ENCODE measurements at regions of chr3 and their contacts with region 1.

Region 1: GRCh38 chr3:116254541-116254940 is 190.7 kb downstream of the LSAMP start:
- DNase-seq: no peak
- H3K4me3 ChIP-seq: no peak overlapping the region
- H3K27ac ChIP-seq: peak overlapping the region in 3 of 4 donors; percentile 58 to 74 (median 61)
- H3K4me1 ChIP-seq: peaks cover 3 to 71% (median 56%) of the 10 kb centered on the region in 4 donors
- H3K27me3 ChIP-seq: no peaks in the 10 kb centered on the region
- CTCF ChIP-seq: no peak
- EP300 ChIP-seq: no peak
- POLR2A ChIP-seq: no peak

Region 2: DNA sequence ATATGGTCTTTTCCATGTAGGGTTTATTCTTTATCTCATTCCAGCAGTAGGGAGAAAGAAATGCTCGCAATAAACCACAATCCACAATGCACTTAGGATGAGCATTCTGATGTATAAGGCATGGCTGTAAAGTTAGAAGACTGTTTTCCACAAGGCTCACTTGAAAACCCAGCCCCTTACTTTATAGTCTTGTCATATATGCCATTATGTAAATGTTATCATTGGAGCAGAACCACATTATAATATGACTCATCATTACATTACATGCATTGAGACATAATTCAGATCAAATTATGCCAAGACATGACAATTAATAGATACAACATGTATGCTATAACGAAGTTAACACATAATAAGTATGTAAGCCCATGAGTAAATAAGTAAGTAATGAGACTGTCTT is 157.3 kb before region 1 on chr3:
- intact Hi-C with region 1: no loop called
- DNase-seq: no peak
- H3K4me3 ChIP-seq: no peak overlapping the region
- H3K27ac ChIP-seq: no peak overlapping the region
- H3K4me1 ChIP-seq: peaks cover 0 to 14% (median 3%) of the 10 kb centered on the region in 4 donors
- H3K27me3 ChIP-seq: no peaks in the 10 kb centered on the region
- CTCF ChIP-seq: no peak
- EP300 ChIP-seq: no peak
- POLR2A ChIP-seq: no peak

Region 3: DNA sequence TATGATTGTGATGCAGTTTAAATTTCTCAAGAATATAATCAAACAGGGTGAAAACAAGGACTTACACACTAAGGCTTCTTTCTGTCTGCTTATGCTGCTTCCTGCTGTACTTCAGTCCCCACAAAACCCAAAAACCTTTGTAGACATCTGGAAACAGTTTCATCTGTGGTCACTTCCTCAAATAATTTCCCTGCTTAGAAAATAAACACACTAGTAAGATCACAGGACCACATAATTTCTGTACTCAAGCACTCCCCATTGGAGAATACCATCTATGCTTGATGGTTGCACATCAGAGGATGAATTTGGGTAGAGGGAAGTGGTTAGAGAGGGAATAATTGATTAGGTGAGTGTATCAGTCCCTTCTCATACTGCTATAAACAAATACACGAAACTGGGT is 75.5 kb before region 1 on chr3:
- intact Hi-C with region 1: no loop called
- DNase-seq: no peak
- H3K4me3 ChIP-seq: no peak overlapping the region
- H3K27ac ChIP-seq: no peak overlapping the region
- H3K4me1 ChIP-seq: peaks cover 0 to 10% (median 0%) of the 10 kb centered on the region in 4 donors
- H3K27me3 ChIP-seq: no peaks in the 10 kb centered on the region
- CTCF ChIP-seq: no peak
- EP300 ChIP-seq: no peak
- POLR2A ChIP-seq: no peak

Region 4: GRCh38 chr3:116198087-116198486 is 56.5 kb before region 1 on chr3:
- intact Hi-C with region 1: no loop called
- DNase-seq: no peak
- H3K4me3 ChIP-seq: no peak overlapping the region
- H3K27ac ChIP-seq: no peak overlapping the region
- H3K4me1 ChIP-seq: no peaks in the 10 kb centered on the region
- H3K27me3 ChIP-seq: no peaks in the 10 kb centered on the region
- CTCF ChIP-seq: no peak
- EP300 ChIP-seq: no peak
- POLR2A ChIP-seq: no peak

Region 5: GRCh38 chr3:116314476-116314875 is 59.9 kb after region 1 on chr3:
- intact Hi-C with region 1: loop called (anchors 5 kb)
- DNase-seq: no peak
- H3K4me3 ChIP-seq: no peak overlapping the region
- H3K27ac ChIP-seq: peak overlapping the region in 3 of 4 donors; percentile 50 to 66 (median 61)
- H3K4me1 ChIP-seq: peaks cover 0 to 40% (median 32%) of the 10 kb centered on the region in 4 donors
- H3K27me3 ChIP-seq: no peaks in the 10 kb centered on the region
- CTCF ChIP-seq: no peak
- EP300 ChIP-seq: no peak
- POLR2A ChIP-seq: no peak

Measured in sigmoid colon (tissue), 7 donors.